ENCODE measurements at regions of chr1 and their contacts with region 1.

Region 1: DNA sequence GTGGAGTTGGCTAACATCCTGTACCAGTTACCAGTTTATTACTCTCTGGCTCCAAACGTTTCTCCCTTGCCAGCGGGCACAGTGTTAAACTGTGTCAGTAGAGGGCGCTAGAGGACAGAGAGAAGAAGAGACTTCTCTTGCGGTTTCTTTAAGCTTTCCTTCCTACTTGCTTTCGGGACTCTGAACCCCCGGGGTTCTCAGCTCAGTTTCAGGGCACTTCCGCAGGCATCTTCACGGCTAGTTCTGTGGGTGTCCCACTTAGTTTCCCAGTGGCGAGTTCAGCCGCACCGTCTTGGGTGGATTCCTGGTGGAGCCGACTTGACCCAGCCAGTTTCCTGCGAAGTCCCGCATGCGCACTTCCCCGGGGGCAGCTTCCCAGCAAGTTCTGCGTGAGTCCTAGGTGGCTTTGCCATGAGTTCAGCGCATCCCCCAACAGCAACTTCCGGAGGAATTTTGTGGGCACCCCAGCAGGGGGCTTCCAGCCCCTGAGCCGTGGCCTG is 37.9 kb upstream of the BTG2 start:
- DNase-seq: peak; percentile 57
- H3K4me3 ChIP-seq: peak overlapping the region; percentile 79
- H3K27ac ChIP-seq: no peak overlapping the region
- H3K27me3 ChIP-seq: peaks cover 16% of the 10 kb centered on the region
- CTCF ChIP-seq: peak; percentile 97

Region 2: DNA sequence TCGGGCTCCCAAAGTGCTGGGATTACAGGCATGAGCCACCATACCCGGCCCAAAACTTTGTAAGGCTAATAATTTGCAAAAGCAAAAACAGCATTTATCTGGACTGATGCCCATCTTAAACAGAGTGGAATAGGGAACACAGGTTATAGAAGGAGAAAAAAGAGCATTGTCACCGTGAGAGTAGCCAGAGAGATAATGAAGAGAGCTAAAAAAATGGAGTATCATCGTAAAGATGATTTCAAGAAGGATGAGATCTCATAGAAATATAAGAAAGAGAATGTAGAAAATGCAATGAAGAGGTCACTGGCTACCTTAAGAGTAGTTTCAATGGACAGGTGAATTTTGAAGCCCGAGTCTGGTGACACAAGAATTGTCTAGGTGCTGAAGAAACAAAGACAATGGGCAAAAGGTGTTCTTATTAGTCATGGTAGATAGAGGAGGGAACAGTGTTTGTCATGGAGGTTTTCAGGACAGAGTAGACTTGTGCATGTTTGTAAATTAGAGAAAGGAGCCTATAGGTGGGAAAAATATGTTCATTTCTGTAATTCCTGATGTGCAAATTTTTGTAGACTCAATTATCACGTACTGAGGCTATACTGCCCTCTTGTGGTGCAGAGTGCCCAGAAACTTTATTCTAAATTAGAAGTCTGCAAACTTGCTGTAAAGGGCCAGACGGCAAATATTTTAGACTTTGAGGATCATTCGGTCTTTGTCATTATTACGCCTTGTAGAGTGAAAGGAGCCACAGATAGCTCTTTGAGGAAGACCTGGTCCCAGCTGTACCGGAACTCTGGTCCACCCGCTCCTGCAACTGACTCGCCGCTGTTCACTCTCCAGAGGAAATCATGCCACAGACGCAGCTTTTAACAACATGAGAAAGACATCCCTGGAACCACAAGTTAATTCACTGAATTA is 268.3 kb before region 1 on chr1:
- CTCF ChIA-PET with region 1: interaction called, 15 read pairs
- POLR2A ChIA-PET with region 1: no interaction called
- DNase-seq: no peak
- H3K4me3 ChIP-seq: no peak overlapping the region
- H3K27ac ChIP-seq: no peak overlapping the region
- H3K27me3 ChIP-seq: peaks cover 9% of the 10 kb centered on the region
- CTCF ChIP-seq: peak; percentile 78

Region 3: DNA sequence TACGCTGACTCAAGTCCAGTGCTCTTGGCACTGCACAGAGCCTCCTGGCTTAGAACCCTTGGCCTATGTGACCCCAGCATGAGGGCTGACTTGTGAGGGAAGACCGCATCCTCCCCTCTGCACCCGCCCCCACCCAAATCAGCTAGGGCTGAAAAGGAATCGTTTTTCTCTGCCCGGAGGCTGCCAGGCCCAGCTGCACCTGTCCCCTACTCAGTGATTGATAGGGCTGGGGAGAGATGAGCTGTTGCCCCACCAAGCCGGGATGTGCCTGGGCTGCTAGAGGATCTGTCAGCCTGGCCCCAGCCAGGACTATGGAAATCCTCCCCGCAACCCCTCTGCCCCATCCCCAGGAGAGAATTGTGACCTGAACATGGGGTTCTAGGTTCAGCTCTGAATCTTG is 202.2 kb before region 1 on chr1:
- CTCF ChIA-PET with region 1: interaction called, 12 read pairs
- POLR2A ChIA-PET with region 1: no interaction called
- DNase-seq: no peak
- H3K4me3 ChIP-seq: no peak overlapping the region
- H3K27ac ChIP-seq: no peak overlapping the region
- H3K27me3 ChIP-seq: peaks cover 13% of the 10 kb centered on the region
- CTCF ChIP-seq: no peak

Region 4: DNA sequence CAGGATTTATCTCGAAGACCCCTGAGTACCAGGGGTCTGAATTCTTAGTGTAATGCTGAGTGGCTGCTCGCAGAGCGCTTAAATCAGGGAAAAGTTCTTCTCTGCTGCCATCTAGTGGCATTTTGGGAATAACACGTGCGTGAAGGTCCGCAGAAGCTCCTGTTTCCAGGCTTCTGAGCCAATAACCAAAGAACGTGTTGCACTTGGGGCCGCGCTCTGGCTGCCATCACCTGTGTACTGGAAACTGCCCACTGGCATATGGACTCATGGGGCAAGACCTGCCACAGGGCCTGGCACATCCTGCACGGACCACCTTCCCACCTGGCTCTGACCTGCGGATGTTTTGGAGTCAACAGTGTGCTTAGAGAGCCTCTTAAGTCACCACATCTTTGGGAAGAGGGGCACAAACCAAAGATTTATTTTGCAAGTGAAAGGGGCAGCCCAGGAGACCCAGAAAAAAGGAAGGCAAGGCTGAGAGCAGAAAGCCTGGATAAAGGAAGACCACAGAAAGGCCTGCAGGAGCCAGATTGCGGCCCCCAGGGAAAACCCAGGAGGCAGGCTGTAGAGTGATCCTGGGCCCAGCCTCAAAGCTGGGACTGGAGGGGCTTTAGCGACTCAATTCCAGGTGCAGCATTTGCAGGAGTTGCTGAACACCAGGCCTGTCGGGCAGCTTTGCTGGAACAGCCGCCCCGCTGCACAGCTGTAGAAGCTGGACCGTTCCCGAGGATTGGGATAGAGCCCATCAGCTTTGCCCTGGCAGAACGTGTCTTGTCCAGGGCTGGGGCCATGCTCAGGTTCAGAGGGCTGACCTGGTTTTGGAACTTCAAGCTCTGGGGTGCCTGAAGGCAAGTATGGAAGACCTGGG is 50.9 kb before region 1 on chr1:
- CTCF ChIA-PET with region 1: interaction called, 41 read pairs
- POLR2A ChIA-PET with region 1: no interaction called
- DNase-seq: peak; percentile 33
- H3K4me3 ChIP-seq: no peak overlapping the region
- H3K27ac ChIP-seq: no peak overlapping the region
- H3K27me3 ChIP-seq: peaks cover 42% of the 10 kb centered on the region
- CTCF ChIP-seq: peak; percentile 65

Region 5: DNA sequence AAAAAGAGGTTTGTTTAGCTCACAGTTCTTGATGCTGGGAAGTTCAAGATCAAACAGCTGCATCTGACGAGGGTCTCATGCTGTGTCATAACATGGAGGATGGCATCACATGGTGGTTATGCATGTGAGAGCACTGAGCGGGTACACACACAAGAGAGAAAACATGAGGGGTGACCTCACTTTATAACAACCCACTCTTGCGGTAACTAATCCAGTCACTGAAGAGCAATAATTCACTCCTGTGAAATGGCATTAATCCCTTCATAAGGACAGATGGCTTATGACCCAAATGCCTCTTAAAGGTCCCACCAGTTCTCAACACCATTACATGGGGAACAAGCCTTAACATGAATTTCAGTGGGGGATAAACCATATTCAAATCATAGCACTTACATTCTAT is 14.7 kb before region 1 on chr1:
- CTCF ChIA-PET with region 1: interaction called, 27 read pairs
- POLR2A ChIA-PET with region 1: no interaction called
- DNase-seq: no peak
- H3K4me3 ChIP-seq: no peak overlapping the region
- H3K27ac ChIP-seq: no peak overlapping the region
- H3K27me3 ChIP-seq: peaks cover 6% of the 10 kb centered on the region
- CTCF ChIP-seq: no peak

Region 6: DNA sequence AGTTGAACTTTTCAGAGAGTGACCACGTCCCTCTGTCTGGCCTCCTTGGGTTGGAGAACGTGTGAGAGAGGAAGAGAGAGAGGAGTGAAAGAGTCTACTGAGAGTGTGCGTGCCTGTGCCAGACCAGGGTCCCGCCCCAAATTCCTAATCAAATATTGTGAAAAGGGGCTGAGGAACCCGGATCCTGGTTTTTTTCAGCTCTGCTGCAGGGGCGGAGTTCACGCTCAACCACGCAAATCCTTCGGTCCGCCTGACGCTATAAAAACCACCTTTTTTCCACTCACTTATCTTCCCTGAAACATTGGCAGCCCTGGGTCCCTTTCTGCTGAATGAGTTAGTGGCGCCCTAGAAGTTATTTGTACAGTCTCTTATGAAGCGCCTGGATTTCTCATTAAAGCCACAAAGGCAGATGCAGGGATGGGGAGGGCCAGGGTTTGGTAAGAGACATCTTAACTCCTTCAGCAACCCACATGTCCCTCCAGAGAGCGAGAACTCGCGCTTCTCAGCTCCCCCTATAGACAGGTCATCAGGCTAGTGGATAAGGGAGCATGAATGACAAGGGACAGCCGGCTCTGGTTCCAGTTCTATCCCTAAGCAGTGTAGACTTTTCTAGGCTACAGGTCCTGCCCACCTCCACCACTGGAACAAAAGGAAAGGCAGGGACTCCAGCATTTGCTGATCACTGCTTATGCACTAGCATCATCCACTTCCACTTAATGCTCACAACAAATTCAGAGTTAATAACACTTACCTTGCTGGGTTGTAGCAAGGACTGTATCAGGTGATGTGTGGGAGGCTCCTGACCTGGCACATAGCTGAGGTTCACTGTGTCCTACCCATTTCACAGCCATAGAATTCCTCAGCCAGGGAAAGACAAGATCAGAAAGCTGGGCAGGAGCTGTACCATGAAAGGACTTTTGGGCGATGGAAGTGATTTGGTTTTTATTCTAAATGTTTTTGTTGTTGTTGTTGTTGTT is 83.9 kb after region 1 on chr1 and contains the start of gene FMOD:
- CTCF ChIA-PET with region 1: interaction called, 12 read pairs
- POLR2A ChIA-PET with region 1: no interaction called
- DNase-seq: no peak
- H3K4me3 ChIP-seq: no peak within 1 kb of the TSS
- H3K27ac ChIP-seq: no peak within 1 kb of the TSS
- H3K27me3 ChIP-seq: peaks cover 25% of the 10 kb centered on the region
- CTCF ChIP-seq: no peak
- polyA plus RNA-seq, gene FMOD: 5.4 and 6.6 TPM in 2 replicates